Activated CD8-positive, alpha-beta T cell treated with anti-CD3 and anti-CD28 coated beads for 36 hours (primary cell): ENCODE measurements at regions of chr20 and their contacts with region 1.

Region 1: DNA sequence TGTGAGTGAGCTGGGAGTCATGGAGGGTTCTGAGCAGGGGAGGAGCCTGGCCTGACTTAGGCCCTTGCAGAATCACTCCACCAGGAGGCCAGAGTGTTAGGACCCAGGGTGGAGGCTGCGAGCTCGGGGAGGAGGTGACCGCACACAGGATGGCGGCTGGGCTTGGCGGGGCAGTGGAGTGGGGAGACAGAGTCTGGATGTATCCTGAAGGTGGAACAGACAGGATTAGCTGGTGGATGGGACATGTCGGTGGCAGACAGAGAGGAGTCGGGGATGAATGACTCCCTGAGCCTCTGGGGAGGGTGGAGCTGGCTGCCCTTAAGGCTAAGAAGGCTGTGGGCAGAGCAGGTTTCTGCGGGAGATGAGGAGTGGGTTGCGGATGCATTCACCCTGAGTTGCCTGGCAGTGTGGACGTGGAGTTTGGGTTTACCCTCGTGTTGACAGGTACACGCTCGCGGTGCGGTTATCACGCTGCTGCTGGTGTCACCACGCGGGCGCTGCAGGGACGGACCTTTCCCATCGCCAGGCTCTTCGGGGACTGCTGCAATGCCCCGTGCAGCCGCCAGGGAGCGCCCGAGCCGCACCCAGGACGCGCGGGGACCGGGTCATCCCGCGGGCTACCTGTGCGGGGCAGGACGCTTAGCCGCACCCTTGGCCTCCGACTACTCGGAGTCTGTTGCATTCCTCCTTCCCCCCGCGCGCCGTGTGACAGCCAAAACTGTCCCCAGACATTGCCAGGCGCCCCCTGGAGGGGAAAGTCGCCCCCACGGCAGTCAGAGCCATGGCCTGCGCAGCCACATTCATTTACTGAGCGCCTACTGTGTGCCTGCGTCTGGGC is 43.0 kb upstream of the PTGIS start:
- DNase-seq: peak; percentile 83
- ATAC-seq: peak; percentile 81
- H3K4me3 Mint-ChIP-seq: peak overlapping the region; percentile 31
- H3K27ac Mint-ChIP-seq: no peak overlapping the region
- H3K4me1 Mint-ChIP-seq: peaks cover 20% of the 10 kb centered on the region
- H3K27me3 Mint-ChIP-seq: peaks cover 13% of the 10 kb centered on the region
- CTCF ChIP-seq: peak; percentile 99

Region 2: GRCh38 chr20:49534255-49534712 is 76.6 kb before region 1 on chr20:
- CTCF ChIA-PET with region 1: interaction called, 438 read pairs
- POLR2A ChIA-PET with region 1: interaction called, 4 read pairs
- intact Hi-C with region 1: no loop called
- DNase-seq: peak; percentile 81
- ATAC-seq: peak; percentile 76
- H3K4me3 Mint-ChIP-seq: no peak overlapping the region
- H3K27ac Mint-ChIP-seq: peak overlapping the region; percentile 90
- H3K4me1 Mint-ChIP-seq: peaks cover 20% of the 10 kb centered on the region
- H3K27me3 Mint-ChIP-seq: peaks cover 26% of the 10 kb centered on the region
- CTCF ChIP-seq: peak; percentile 97

Region 3: DNA sequence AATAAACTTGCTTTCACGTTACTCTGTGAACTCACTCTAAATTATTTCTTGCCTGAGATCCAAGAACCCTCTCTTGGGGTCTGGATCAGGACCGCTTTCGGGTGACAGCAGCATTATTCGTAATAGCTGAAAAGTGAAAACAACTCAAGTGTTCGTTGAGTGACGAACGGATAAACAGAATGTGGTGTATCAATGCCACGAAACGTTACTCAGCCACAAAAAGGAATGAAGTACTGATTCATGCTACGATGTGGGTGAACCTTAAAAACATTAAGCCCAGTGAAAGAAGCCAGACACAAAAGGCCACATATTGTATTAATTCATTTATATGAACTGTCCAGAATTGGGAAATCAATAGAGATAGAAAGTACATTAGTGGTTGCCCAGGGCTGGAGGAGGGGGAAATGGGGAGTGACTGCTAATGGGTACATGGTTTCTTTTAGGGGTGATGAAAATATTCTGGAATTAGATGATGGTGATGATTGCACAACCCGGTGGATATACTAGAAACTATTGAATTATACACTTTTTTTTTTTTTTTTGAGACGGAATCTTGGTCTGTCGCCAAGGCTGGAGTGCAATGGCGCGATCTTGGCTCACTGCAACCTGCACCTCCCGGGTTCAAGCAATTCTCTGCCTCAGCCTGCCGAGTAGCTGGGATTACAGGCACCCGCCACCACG is 51.4 kb before region 1 on chr20:
- CTCF ChIA-PET with region 1: interaction called, 10 read pairs
- POLR2A ChIA-PET with region 1: no interaction called
- intact Hi-C with region 1: no loop called
- DNase-seq: no peak
- ATAC-seq: no peak
- H3K4me3 Mint-ChIP-seq: no peak overlapping the region
- H3K27ac Mint-ChIP-seq: no peak overlapping the region
- H3K4me1 Mint-ChIP-seq: no peaks in the 10 kb centered on the region
- H3K27me3 Mint-ChIP-seq: peaks cover 47% of the 10 kb centered on the region
- CTCF ChIP-seq: no peak

Region 4: GRCh38 chr20:49724408-49725223 is 113.7 kb after region 1 on chr20:
- CTCF ChIA-PET with region 1: interaction called, 9 read pairs
- POLR2A ChIA-PET with region 1: no interaction called
- intact Hi-C with region 1: loop called (anchors 10 kb)
- DNase-seq: peak; percentile 16
- ATAC-seq: no peak
- H3K4me3 Mint-ChIP-seq: no peak overlapping the region
- H3K27ac Mint-ChIP-seq: no peak overlapping the region
- H3K4me1 Mint-ChIP-seq: peaks cover 9% of the 10 kb centered on the region
- H3K27me3 Mint-ChIP-seq: peaks cover 1% of the 10 kb centered on the region
- CTCF ChIP-seq: no peak

Region 5: GRCh38 chr20:49810501-49811450 is 199.9 kb after region 1 on chr20:
- CTCF ChIA-PET with region 1: no interaction called
- POLR2A ChIA-PET with region 1: no interaction called
- intact Hi-C with region 1: no loop called
- DNase-seq: no peak
- ATAC-seq: no peak
- H3K4me3 Mint-ChIP-seq: no peak overlapping the region
- H3K27ac Mint-ChIP-seq: no peak overlapping the region
- H3K4me1 Mint-ChIP-seq: peaks cover 46% of the 10 kb centered on the region
- H3K27me3 Mint-ChIP-seq: no peaks in the 10 kb centered on the region
- CTCF ChIP-seq: no peak

Region 6: DNA sequence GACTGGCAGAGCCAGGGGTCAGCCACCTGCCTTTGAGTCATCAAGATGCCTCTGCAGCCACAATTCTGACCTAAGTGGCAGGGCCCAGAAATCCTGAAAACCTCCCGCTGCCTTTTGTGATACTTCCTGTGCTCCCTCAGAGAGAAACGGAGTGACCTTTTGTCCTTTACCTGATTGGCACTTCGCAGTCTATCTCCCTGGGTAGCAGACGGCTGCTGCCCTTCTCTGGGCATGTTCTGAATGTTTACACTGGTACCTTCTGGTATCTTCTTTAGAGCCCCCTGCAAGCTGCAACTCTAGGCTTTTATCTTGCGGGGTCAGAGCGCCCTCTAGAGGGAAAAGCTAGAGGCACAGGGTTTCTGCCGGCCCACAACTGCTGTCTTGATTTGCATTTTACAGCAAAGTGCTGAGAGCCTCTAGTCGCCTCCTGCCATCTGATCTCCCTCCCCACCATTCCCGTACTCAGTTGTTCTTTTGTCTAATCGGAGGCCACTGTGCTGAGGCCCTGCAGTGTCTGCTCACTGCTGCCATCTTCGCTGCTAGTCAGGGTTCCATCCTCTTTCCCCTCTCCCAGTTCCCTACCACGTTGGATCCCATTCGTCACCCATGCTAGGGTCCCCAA is 277.5 kb after region 1 on chr20:
- CTCF ChIA-PET with region 1: interaction called, 27 read pairs
- POLR2A ChIA-PET with region 1: interaction called, 3 read pairs
- intact Hi-C with region 1: no loop called
- DNase-seq: peak; percentile 76
- ATAC-seq: peak; percentile 68
- H3K4me3 Mint-ChIP-seq: no peak overlapping the region
- H3K27ac Mint-ChIP-seq: no peak overlapping the region
- H3K4me1 Mint-ChIP-seq: peaks cover 23% of the 10 kb centered on the region
- H3K27me3 Mint-ChIP-seq: no peaks in the 10 kb centered on the region
- CTCF ChIP-seq: peak; percentile 92